Naive thymus-derived CD4-positive, alpha-beta T cell (primary cell): ENCODE measurements at regions of chr1 and their contacts with region 1.

Region 1: DNA sequence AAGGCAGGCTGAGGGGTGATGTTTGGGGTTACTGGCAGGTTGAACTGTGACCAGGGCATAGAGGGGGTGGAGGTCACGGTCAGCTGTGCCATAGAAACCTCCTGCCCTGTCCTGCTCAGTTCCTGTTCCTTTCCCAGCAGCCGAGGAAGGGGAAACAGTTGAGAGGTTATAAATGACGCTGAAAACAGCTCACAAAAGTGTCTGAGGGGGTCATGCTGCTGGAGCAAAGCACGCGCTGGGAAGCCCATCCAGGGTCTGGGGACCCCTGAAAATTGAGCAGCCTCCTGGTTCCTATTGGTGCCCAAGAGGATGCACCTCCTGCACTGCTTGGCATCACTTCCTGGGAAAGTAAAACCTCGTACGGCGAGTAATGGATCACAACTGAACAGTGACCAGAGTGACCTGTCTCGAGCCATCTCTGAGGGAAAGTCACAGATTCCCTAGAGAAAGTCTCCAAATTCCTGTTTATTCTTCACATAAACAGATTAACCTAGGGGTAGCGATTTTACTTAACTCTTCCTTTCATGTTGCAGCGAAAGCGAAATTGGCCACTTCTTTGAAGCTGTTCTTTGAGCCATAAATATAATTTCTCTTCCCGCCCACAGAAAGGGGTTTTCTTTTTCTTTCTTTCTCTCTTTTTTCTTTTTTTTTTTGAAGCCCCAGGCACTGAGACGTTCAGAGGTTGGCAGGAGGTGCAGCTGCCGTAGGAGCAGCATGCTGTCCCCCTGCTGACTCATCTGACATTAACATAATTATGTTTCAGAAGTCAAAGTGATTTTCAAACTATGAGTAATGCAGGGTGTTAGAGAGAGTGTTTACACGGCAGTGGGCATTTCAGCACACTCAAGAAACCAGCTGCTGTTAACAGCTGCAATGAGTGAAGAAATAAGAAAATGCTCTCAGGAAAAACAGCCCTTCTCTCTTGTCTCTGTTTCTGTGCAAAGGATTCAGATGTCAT is 41.8 kb upstream of the ATF3 start:
- DNase-seq: peak in 7 of 9 donors; percentile 23 to 66 (median 30)
- ATAC-seq: peak; percentile 96
- H3K4me3 ChIP-seq: peak overlapping the region; percentile 78
- H3K4me3 Mint-ChIP-seq: peak overlapping the region; percentile 80 to 98 (median 88)
- H3K27ac ChIP-seq: peak overlapping the region; percentile 31
- H3K27ac Mint-ChIP-seq: peak overlapping the region; percentile 62 to 90 (median 77)
- H3K4me1 ChIP-seq: peaks cover 0 to 6% of the 10 kb centered on the region in 2 donors
- H3K4me1 Mint-ChIP-seq: peaks cover 9 to 27% (median 15%) of the 10 kb centered on the region in 7 donors
- H3K27me3 ChIP-seq: no peaks in the 10 kb centered on the region
- H3K27me3 Mint-ChIP-seq: peaks cover 0 to 43% (median 0%) of the 10 kb centered on the region in 5 donors

Region 2: GRCh38 chr1:212595787-212596714 is 29.2 kb after region 1 on chr1:
- CTCF ChIA-PET with region 1: no interaction called
- POLR2A ChIA-PET with region 1: no interaction called
- intact Hi-C with region 1: loop called (anchors 1 to 2 kb)
- DNase-seq: peak in 7 of 9 donors; percentile 28 to 78 (median 50)
- ATAC-seq: peak; percentile 94
- H3K4me3 ChIP-seq: peak overlapping the region; percentile 14
- H3K4me3 Mint-ChIP-seq: peak overlapping the region; percentile 4 to 84 (median 72)
- H3K27ac ChIP-seq: no peak overlapping the region
- H3K27ac Mint-ChIP-seq: peak overlapping the region; percentile 19 to 99 (median 79)
- H3K4me1 ChIP-seq: peaks cover 8 to 11% of the 10 kb centered on the region in 2 donors
- H3K4me1 Mint-ChIP-seq: peaks cover 0 to 27% (median 14%) of the 10 kb centered on the region in 7 donors
- H3K27me3 ChIP-seq: no peaks in the 10 kb centered on the region
- H3K27me3 Mint-ChIP-seq: peaks cover 8 to 19% (median 12%) of the 10 kb centered on the region in 5 donors

Region 3: DNA sequence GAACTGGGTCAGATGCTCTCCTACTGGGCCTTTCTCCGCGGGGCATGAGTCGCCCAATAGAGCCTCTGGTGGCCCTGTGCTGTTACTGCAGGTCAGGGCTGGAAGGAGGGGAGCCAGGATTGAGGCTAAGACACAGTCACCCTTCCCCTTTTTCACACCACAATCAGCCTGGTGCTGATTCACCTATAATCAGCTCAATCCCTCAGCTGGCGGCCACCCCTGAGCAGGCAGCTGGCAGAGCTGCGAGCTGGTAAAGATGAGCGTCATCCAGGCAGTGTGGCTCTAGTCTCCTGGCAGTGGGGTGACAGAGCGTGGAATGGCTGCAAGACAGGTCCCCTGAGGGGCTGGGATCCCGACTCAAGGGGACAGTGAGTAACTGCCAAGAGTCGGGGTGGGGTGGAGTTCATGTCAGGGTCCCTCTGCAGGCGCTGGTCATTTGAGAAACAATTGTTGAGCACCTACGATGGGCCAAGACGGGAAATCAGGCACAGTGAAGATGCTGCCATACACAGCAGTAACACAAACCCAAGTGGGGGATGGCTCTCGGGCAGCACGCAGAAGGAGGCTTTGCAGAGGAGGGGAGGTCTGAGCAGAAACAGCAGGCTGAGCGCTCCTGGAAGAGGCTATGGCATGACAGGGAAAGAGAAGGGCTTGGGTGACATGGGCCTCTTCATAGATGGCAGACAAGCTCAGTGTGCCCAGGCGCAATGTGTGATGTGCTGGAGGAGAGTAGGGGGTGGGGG is 63.5 kb after region 1 on chr1:
- CTCF ChIA-PET with region 1: no interaction called
- POLR2A ChIA-PET with region 1: no interaction called
- intact Hi-C with region 1: loop called in 1 of 2 experiments (anchors 2 kb)
- DNase-seq: peak in 8 of 9 donors; percentile 26 to 59 (median 44)
- ATAC-seq: peak; percentile 97
- H3K4me3 ChIP-seq: no peak overlapping the region
- H3K4me3 Mint-ChIP-seq: no peak overlapping the region
- H3K27ac ChIP-seq: no peak overlapping the region
- H3K27ac Mint-ChIP-seq: no peak overlapping the region
- H3K4me1 ChIP-seq: peaks cover 0 to 2% of the 10 kb centered on the region in 2 donors
- H3K4me1 Mint-ChIP-seq: peaks cover 0 to 14% (median 5%) of the 10 kb centered on the region in 7 donors
- H3K27me3 ChIP-seq: no peaks in the 10 kb centered on the region
- H3K27me3 Mint-ChIP-seq: peaks cover 0 to 16% (median 6%) of the 10 kb centered on the region in 5 donors